ENCODE measurements at regions of chr11 and their contacts with region 1.

Region 1: DNA sequence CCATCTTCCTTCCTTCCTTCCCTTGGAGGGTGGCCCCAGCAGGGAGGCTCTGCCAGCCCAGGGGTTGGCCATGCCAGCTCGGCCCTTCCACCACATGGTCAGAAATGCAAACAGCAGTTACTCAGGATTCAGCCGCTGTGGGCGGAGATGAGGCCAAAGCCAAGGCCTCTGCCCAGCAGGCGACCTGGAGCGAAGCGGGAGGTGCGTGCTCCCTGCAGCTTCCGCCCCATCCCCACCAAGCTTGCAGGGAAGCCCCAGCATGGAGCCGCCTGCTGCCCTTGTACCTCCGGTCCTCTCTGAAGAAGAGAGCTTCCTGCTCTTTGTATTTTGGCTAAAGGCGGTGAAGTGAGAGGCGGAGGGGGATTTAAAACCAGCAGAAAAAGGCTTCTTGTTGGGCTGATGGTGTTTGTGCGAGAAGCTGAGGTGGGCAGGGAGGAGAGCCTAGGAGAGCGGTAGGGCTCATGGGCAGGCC is 50.4 kb downstream of the ANO1 start:
- DNase-seq: no peak
- H3K4me3 ChIP-seq: no peak overlapping the region
- H3K27ac ChIP-seq: no peak overlapping the region
- H3K27me3 ChIP-seq: no peaks in the 10 kb centered on the region
- CTCF ChIP-seq: no peak

Region 2: DNA sequence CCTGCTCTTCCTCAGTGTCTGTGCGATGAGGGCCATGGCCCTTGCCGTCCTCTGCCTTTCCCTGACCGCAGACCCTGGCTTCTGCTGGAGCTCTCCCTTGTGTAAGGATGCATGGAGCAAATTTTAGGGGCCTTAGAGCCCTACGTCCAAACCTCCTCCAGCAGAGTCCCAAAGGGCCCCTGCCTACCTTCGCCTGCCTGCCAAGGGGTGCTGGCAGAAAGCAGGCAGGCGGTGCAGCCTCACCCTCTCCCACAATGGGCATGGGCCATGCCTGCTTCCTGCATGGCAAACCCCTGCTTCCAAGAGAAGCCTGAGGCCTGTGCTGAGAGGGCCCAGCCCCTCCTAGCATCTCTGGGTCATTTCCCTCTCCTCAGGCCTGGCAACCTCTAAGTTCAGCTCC is 238.0 kb before region 1 on chr11:
- CTCF ChIA-PET with region 1: interaction called, 11 read pairs
- POLR2A ChIA-PET with region 1: no interaction called
- DNase-seq: no peak
- H3K4me3 ChIP-seq: no peak overlapping the region
- H3K27ac ChIP-seq: no peak overlapping the region
- H3K27me3 ChIP-seq: peaks cover 34% of the 10 kb centered on the region
- CTCF ChIP-seq: no peak

Region 3: GRCh38 chr11:70158201-70158600 is 29.7 kb after region 1 on chr11:
- CTCF ChIA-PET with region 1: no interaction called
- POLR2A ChIA-PET with region 1: no interaction called
- DNase-seq: no peak
- H3K4me3 ChIP-seq: no peak overlapping the region
- H3K27ac ChIP-seq: no peak overlapping the region
- H3K27me3 ChIP-seq: peaks cover 4% of the 10 kb centered on the region
- CTCF ChIP-seq: peak; percentile 42

Measured in AG04450 (cell line).